Esophagus squamous epithelium (tissue), 5 donors: ENCODE measurements at regions of chr2 and their contacts with region 1.

Region 1: GRCh38 chr2:58110765-58111164 is 64.2 kb downstream of the VRK2 start:
- DNase-seq: no peak
- H3K4me3 ChIP-seq: no peak overlapping the region
- H3K27ac ChIP-seq: peak overlapping the region in 3 of 4 donors; percentile 22 to 83 (median 73)
- H3K4me1 ChIP-seq: peaks cover 0 to 40% (median 9%) of the 10 kb centered on the region in 3 donors
- H3K27me3 ChIP-seq: no peaks in the 10 kb centered on the region
- CTCF ChIP-seq: no peak
- POLR2A ChIP-seq: no peak

Region 2: DNA sequence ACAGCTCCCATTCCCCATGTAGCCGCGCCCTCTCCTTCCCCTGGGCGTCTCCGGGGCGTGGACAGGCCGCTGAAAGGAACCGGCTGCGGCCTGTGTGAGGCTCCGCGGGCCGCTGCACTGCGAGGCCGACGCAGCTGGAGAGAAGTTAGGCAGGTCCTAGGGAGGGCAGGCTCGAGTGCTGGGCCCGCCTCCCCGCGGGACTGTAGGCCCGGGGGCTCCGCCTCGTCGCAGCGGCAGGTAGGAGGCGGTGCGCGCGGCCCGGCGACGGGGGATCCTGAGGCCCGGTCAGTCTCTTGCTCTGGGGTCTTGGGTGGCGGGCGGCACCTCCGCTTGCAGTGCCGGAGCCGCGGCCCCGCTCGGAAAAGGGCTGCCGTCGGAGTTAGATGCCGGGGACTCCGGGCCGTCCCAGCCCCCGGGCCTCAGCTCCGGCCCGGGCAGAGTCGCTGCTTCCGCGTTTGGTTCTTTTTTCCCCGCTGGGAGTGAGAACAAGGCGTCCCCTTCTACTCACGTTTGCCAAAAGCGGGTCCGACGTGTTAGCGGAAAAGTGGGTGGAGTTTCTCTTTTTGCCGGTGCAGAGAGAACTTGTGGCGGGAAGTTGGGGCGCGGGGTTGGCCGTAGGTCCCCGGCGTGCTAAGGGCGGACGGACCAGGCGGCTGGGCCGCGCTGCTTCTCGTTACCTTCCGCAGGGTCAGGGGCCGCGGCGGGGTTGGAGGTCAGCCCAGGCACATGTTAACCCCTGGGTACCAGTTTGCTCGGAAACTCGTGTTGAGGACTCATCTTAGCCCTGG is 64.0 kb before region 1 on chr2 and contains the start of gene VRK2:
- intact Hi-C with region 1: loop called (anchors 10 kb)
- DNase-seq: peak; percentile 74
- H3K4me3 ChIP-seq: peak within 1 kb of the TSS; percentile 78 to 91 (median 86)
- H3K27ac ChIP-seq: peak within 1 kb of the TSS; percentile 96 to 99 (median 98)
- H3K4me1 ChIP-seq: peaks cover 4 to 42% (median 9%) of the 10 kb centered on the region in 3 donors
- H3K27me3 ChIP-seq: no peaks in the 10 kb centered on the region
- CTCF ChIP-seq: peak in 3 of 6 experiments; percentile 13 to 34 (median 17)
- POLR2A ChIP-seq: peak in 3 of 4 donors; percentile 12 to 91 (median 80)
- total RNA-seq, gene VRK2: 17.9 to 33.6 (median 25.7) TPM

Region 3: GRCh38 chr2:58584606-58585118 is 473.9 kb after region 1 on chr2:
- intact Hi-C with region 1: no loop called
- DNase-seq: no peak
- H3K4me3 ChIP-seq: no peak overlapping the region
- H3K27ac ChIP-seq: no peak overlapping the region
- H3K4me1 ChIP-seq: no peaks in the 10 kb centered on the region
- H3K27me3 ChIP-seq: no peaks in the 10 kb centered on the region
- CTCF ChIP-seq: no peak
- POLR2A ChIP-seq: no peak